ENCODE measurements at regions of chr1 and their contacts with region 1.

Region 1: GRCh38 chr1:151945725-151946364 is 36.5 kb upstream of the THEM4 start:
- DNase-seq: peak; percentile 96 to 97
- H3K4me3 ChIP-seq: peak overlapping the region; percentile 35; the same call in 1 of the 2 replicates
- H3K27ac ChIP-seq: peak overlapping the region; percentile 91
- H3K4me1 ChIP-seq: peaks cover 72% of the 10 kb centered on the region
- H3K27me3 ChIP-seq: no peaks in the 10 kb centered on the region
- CTCF ChIP-seq: no peak

Region 2: DNA sequence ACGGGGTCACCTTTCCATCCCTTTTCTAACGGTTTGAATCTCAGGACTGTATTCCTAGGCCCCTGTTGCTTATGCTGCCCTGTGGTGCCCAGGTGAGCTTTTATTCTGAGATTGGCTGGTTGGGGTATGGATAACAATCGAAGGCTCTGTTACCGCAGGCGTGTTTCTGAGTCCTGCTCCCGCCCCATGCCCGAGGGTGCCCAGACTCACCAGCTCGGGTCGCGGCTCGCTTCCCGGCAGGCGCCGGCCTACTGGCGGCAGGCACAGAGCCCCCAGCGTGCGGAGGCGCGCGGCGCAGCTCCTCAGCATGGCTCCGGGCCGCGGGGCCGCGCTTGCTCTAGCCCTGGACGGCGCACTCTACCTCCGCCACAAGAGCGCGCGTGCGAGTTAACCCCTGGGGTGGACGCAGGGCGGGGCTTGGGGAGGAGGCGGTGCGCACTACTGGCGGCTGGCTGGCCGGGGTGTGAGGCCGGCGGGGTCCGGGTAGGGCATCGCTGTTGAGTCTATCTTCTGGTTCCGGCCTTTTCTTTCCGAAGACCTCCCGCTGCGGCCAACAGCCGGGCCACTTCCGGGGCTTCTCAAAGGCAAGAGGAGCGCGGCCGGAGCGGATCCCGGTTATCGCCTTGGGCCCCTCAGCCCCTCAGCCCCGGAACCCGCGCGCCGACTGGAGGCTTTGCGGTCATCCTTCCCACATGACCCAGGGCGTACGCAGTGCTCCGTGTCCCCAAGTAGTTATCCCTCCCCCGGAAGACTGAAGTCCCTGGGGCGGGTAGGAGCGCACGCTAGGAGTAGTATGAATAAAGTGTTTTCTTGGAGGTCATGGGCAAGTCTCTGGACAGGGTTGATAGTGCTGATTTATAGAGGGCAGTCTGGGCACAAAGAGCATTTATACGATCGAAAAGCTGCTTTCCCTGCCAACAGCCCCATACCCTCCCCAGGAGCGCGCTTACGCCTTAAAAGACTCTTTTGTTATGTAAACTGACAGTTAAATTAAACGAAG is 36.4 kb before region 1 on chr1 and contains the start of gene THEM4:
- CTCF ChIA-PET with region 1: no interaction called
- POLR2A ChIA-PET with region 1: interaction called, 6 read pairs
- intact Hi-C with region 1: loop called (anchors 2 kb)
- DNase-seq: peak; percentile 87 to 98
- H3K4me3 ChIP-seq: peak within 1 kb of the TSS; percentile 78
- H3K27ac ChIP-seq: peak within 1 kb of the TSS; percentile 84
- H3K4me1 ChIP-seq: peaks cover 30% of the 10 kb centered on the region
- H3K27me3 ChIP-seq: no peaks in the 10 kb centered on the region
- CTCF ChIP-seq: no peak
- total RNA-seq, gene THEM4: 24.1 and 41.4 TPM in 2 replicates

Region 3: DNA sequence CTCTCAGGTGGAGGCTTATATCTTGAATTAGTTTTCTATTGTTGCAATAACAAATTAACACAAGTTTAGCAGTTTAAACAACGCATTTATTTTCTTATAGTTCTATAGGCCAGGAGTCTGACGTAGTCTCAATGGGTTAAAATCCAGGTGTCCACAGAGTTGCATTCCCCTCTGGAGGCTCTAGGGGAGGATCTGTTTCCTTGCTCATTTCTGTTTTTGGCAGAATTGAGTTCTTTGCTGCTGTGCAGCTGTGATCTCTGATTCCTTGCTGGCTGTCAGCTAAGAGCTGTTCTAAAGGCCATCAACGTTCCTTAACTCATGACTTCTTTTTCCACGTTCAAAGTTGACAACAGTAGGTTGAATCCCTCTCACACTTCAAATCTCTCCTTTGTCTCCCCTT is 16.0 kb after region 1 on chr1:
- CTCF ChIA-PET with region 1: no interaction called
- POLR2A ChIA-PET with region 1: no interaction called
- intact Hi-C with region 1: no loop called
- DNase-seq: no peak
- H3K4me3 ChIP-seq: no peak overlapping the region
- H3K27ac ChIP-seq: no peak overlapping the region
- H3K4me1 ChIP-seq: 0 out of 2 replicates have a peak, but pooled peaks cover 5% of the 10 kb centered on the region
- H3K27me3 ChIP-seq: no peaks in the 10 kb centered on the region
- CTCF ChIP-seq: no peak

Region 4: DNA sequence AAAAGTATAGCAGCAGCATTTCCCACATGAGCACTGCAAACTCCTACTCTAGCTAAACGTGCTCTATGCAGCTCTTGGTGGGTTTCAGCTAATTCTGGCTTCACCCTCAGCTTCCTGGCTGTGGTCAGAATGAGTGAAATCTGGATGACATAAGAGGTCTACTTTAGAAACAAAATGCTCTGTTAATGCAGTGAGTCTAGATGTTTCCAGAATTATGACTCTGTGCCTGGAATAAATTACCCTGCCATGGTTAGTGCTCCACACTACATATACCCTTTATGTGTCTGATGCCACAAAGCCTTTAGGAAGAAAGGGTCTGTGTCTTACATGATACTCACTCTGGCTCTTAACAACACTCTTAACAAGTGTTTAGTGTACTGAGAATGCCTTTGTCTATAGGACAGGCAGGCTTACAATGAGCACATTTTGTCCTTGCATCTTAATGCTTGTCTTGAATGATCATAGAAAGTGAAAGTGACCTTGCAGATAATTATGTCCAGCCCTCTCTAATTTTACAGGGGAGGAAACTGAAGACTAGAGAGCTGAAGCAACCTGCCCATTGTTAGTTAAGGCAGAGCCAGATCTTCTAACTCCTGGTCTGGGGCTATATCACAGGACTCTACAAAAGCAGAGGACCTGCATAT is 38.6 kb after region 1 on chr1:
- CTCF ChIA-PET with region 1: no interaction called
- POLR2A ChIA-PET with region 1: interaction called, 3 read pairs
- intact Hi-C with region 1: loop called (anchors 1 kb)
- DNase-seq: no peak
- H3K4me3 ChIP-seq: no peak overlapping the region
- H3K27ac ChIP-seq: peak overlapping the region; percentile 9; the same call in 1 of the 2 replicates
- H3K4me1 ChIP-seq: peaks cover 93% of the 10 kb centered on the region
- H3K27me3 ChIP-seq: no peaks in the 10 kb centered on the region
- CTCF ChIP-seq: no peak

Region 5: DNA sequence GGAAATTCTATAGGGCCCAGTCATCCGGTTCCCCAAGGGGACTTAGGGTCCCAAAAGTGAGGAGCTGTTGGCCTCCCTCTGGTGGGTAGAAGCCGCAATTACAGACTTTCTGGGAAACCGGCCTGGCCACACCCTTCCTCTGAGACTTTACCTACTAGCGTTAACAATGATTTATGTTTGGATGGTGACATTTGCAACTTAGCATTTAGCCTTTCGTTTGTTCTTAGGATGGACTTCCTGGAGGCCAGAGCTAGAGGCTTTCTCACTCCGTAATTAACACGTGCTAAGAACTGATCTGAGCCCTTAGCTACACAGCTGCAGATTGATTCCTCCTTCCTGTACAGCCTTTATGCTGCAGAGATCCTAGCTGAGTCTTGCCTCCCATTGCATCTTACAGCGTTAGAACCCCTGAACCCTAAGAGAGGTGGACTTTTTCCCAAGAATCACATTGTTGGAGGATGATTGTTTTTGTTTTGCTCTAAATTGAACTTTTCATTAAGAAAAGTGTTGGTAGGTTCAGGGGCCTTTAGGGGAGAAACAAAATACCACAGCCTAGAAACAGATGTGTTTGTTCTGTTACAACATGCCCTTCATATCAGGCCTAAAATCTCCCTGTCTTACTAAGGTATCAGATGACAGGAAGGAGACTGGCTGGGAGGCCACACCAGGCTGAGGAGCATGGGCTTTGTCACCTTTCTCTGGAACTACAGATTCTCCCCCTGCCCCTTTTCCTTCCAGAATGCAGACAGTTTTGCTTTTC is 89.0 kb after region 1 on chr1:
- CTCF ChIA-PET with region 1: no interaction called
- POLR2A ChIA-PET with region 1: interaction called, 10 read pairs
- intact Hi-C with region 1: no loop called
- DNase-seq: peak; percentile 78 to 90
- H3K4me3 ChIP-seq: peak overlapping the region; percentile 89
- H3K27ac ChIP-seq: peak overlapping the region; percentile 97
- H3K4me1 ChIP-seq: peaks cover 66% of the 10 kb centered on the region
- H3K27me3 ChIP-seq: no peaks in the 10 kb centered on the region
- CTCF ChIP-seq: peak; percentile 94

Region 6: DNA sequence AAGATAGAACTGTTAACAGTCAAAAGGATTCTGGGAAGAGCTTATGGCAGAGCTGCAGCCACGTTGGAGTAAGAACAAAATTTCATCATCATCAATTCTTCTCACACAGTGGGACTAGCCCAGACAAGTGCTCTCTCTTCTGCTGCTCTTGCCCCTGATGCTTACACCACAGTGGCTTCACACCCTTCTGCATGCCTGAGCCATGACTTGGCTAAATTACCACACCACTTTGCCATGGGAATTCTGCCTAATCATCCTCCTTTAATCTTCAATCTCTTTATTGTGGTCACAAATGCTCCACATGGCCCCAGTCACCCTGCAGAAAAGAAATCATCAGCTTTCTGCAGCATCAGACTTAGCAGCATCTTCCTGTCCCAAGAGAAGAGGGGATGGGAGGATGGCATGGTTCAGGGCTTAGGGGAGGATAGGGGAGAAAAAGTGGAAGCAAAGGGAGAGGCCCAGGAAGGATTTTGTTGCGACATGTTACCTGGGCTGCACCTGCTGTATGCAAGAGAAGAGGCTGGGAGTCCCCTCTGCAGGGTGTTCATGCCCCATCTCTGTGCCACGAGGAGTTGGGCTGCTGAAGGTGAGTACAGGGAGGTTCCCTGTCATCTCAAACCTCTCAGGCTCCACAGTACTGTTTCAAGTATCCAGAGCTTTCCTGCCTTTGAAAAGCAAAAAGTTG is 222.1 kb after region 1 on chr1:
- CTCF ChIA-PET with region 1: no interaction called
- POLR2A ChIA-PET with region 1: no interaction called
- intact Hi-C with region 1: loop called (anchors 5 kb)
- DNase-seq: peak; percentile 82 to 96
- H3K4me3 ChIP-seq: no peak overlapping the region
- H3K27ac ChIP-seq: peak overlapping the region; percentile 73
- H3K4me1 ChIP-seq: peaks cover 70% of the 10 kb centered on the region
- H3K27me3 ChIP-seq: no peaks in the 10 kb centered on the region
- CTCF ChIP-seq: no peak

Measured in PC-9 (cell line).